Lower leg skin (tissue), 4 donors: ENCODE measurements at regions of chr5 and their contacts with region 1.

Region 1: GRCh38 chr5:174793684-174794328 is 69.4 kb downstream of the MSX2 start:
- DNase-seq: peak; percentile 45 to 91
- H3K4me3 ChIP-seq: no peak overlapping the region
- CTCF ChIP-seq: no peak
- POLR2A ChIP-seq: no peak

Region 2: GRCh38 chr5:174327317-174328236 is 466.2 kb before region 1 on chr5:
- intact Hi-C with region 1: loop called (anchors 10 kb)
- DNase-seq: peak in 1 of 2 donors; percentile 8
- H3K4me3 ChIP-seq: no peak overlapping the region
- CTCF ChIP-seq: no peak
- POLR2A ChIP-seq: no peak